Endothelial cell of umbilical vein (primary cell): ENCODE measurements at regions of chr17 and their contacts with region 1.

Region 1: GRCh38 chr17:77036807-77037381 is 103.9 kb upstream of the SEC14L1 start:
- DNase-seq: no peak
- H3K4me3 ChIP-seq: no peak overlapping the region
- H3K27ac ChIP-seq: no peak overlapping the region
- H3K4me1 ChIP-seq: no peaks in the 10 kb centered on the region
- H3K27me3 ChIP-seq: no peaks in the 10 kb centered on the region
- CTCF ChIP-seq: no peak
- POLR2A ChIP-seq: no peak

Region 2: DNA sequence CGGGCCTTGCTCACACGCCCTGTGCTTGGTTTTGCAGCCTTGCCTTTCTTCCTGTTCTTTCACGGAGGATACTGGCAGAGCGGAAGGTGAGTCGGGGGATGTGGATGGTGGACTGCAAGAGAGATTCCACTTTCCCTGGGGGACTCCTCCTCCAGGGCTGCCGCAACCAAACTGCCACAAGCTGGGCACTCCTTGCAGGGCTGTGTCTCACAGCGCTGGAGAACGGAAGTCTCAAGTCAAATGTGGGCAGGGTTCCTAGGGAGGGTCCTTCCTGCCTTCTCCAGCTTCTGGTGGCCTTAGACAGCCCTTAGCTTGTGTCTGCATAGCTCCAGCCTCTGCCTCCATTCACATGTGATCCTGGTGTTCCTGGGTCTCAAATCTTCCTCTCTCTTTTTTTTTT is 1165.8 kb after region 1 on chr17:
- CTCF ChIA-PET with region 1: no interaction called
- POLR2A ChIA-PET with region 1: interaction called, 10 read pairs
- dilution Hi-C with region 1: no loop called
- intact Hi-C with region 1: no loop called
- DNase-seq: no peak
- H3K4me3 ChIP-seq: no peak overlapping the region
- H3K27ac ChIP-seq: no peak overlapping the region
- H3K4me1 ChIP-seq: peaks cover 5% of the 10 kb centered on the region
- H3K27me3 ChIP-seq: no peaks in the 10 kb centered on the region
- CTCF ChIP-seq: no peak
- POLR2A ChIP-seq: no peak